Heart left ventricle (tissue), 16 donors: ENCODE measurements at regions of chr19 and their contacts with region 1.

Region 1: GRCh38 chr19:52007806-52008557 is at the start of gene ZNF615:
- DNase-seq: peak; percentile 90 to 94 (median 93)
- ATAC-seq: peak; percentile 97 to 100 (median 99)
- H3K4me3 ChIP-seq: peak within 1 kb of the TSS; percentile 47 to 92 (median 80)
- H3K27ac ChIP-seq: peak within 1 kb of the TSS; percentile 81 to 94 (median 88)
- H3K4me1 ChIP-seq: peaks cover 0 to 16% (median 9%) of the 10 kb centered on the region in 12 donors
- H3K27me3 ChIP-seq: no peaks in the 10 kb centered on the region
- CTCF ChIP-seq: no peak
- POLR2A ChIP-seq: peak in 1 of 2 donors; percentile 56
- total RNA-seq, gene ZNF615: 7.5 to 14.8 (median 10.2) TPM

Region 2: GRCh38 chr19:50649433-50650391 is 1358.3 kb before region 1 on chr19 and contains the start of gene C19orf81:
- intact Hi-C with region 1: no loop called
- DNase-seq: no peak
- ATAC-seq: no peak
- H3K4me3 ChIP-seq: no peak within 1 kb of the TSS
- H3K27ac ChIP-seq: no peak within 1 kb of the TSS
- H3K4me1 ChIP-seq: no peaks in the 10 kb centered on the region
- H3K27me3 ChIP-seq: peaks cover 0 to 51% (median 13%) of the 10 kb centered on the region in 9 donors
- CTCF ChIP-seq: no peak
- POLR2A ChIP-seq: no peak
- total RNA-seq, gene C19orf81: 0.65 to 3.6 (median 1.7) TPM in 7 of 9 donors, not detected in the others

Region 3: DNA sequence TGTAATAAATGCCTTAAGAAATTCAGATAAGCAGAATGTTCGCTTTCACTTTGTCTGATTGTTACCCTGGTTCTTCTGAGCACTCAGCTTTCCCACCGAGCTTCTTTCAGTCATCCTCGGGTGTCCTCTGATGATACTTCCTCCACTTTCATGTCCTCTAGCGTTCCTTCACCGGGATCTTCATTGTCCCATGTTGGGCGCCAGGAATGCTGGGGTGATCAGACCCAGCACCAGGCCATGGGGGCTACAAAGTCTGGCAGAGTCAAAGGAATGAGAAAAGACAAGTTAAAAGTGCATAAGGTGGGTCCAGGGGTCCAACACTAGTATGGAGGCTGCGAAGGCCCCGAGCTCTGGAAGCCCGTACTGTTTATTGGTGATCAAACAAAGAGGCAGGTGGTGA is 605.9 kb before region 1 on chr19:
- intact Hi-C with region 1: loop called in 1 of 10 experiments (anchors 5 kb)
- DNase-seq: no peak
- ATAC-seq: no peak
- H3K4me3 ChIP-seq: no peak overlapping the region
- H3K27ac ChIP-seq: no peak overlapping the region
- H3K4me1 ChIP-seq: peaks cover 0 to 11% (median 0%) of the 10 kb centered on the region in 12 donors
- H3K27me3 ChIP-seq: peaks cover 0 to 3% (median 0%) of the 10 kb centered on the region in 9 donors
- CTCF ChIP-seq: no peak
- POLR2A ChIP-seq: no peak

Region 4: DNA sequence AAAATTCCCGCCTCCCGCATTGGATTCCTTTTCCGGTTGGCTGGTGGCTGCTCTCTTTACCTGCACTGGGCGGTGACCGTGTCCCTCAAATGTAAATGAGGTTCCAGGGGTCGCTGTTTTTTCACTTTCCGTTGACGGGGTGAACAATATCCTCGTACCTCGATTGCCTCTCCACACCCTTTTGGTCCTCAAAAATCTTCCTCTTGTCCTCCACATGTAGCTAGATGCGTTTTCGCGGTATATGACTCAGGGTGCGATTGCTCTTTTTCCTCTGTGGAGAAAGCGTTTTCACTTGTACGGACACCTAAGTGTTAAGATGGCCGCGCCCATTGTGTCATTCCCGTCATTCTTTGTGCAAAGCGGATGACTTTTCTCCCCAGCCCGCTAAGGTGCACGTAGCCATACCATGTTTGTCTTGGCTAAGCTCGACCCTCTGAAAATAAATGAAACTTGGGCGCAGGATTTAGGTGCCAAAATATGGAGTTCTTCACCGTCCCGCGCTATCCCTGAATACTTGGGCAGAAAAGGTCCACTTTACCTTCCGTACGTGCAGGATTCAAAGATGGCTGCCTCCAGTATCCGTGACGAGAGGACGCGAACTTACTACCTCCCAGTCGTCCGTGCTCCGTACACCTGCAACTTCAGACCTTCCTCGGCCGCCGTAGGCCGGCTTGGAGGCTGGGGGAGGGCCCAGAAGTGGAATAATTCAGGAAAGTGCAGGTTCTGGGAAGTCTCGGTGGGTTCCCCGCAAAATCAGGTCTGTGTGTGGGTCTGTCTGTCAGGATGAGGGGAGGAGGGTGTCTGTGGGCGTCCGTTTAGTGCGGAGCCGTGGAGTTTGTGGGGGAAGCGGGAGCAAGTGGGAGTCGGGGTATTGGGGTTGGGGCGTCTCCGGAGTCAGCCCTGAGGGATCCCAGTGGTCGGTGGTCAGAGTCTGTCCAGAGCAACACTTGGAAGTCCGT is 80.9 kb before region 1 on chr19 and contains the start of gene ZNF613:
- intact Hi-C with region 1: loop called in 1 of 10 experiments (anchors 5 kb)
- DNase-seq: peak; percentile 89 to 93 (median 92)
- ATAC-seq: peak; percentile 97 to 99 (median 98)
- H3K4me3 ChIP-seq: peak within 1 kb of the TSS; percentile 60 to 95 (median 84)
- H3K27ac ChIP-seq: peak within 1 kb of the TSS; percentile 81 to 97 (median 88)
- H3K4me1 ChIP-seq: peaks cover 0 to 13% (median 8%) of the 10 kb centered on the region in 12 donors
- H3K27me3 ChIP-seq: no peaks in the 10 kb centered on the region
- CTCF ChIP-seq: peak in 9 of 12 donors; percentile 12 to 50 (median 33)
- POLR2A ChIP-seq: no peak
- total RNA-seq, gene ZNF613: 3.1 to 6.8 (median 4.3) TPM

Region 5: GRCh38 chr19:51959791-51960190 is 48.2 kb before region 1 on chr19:
- intact Hi-C with region 1: no loop called
- DNase-seq: no peak
- ATAC-seq: peak in 1 of 4 donors; percentile 41
- H3K4me3 ChIP-seq: no peak overlapping the region
- H3K27ac ChIP-seq: peak overlapping the region in 2 of 12 donors; percentile 32 to 39
- H3K4me1 ChIP-seq: peaks cover 0 to 21% (median 0%) of the 10 kb centered on the region in 12 donors
- H3K27me3 ChIP-seq: no peaks in the 10 kb centered on the region
- CTCF ChIP-seq: no peak
- POLR2A ChIP-seq: no peak

Region 6: DNA sequence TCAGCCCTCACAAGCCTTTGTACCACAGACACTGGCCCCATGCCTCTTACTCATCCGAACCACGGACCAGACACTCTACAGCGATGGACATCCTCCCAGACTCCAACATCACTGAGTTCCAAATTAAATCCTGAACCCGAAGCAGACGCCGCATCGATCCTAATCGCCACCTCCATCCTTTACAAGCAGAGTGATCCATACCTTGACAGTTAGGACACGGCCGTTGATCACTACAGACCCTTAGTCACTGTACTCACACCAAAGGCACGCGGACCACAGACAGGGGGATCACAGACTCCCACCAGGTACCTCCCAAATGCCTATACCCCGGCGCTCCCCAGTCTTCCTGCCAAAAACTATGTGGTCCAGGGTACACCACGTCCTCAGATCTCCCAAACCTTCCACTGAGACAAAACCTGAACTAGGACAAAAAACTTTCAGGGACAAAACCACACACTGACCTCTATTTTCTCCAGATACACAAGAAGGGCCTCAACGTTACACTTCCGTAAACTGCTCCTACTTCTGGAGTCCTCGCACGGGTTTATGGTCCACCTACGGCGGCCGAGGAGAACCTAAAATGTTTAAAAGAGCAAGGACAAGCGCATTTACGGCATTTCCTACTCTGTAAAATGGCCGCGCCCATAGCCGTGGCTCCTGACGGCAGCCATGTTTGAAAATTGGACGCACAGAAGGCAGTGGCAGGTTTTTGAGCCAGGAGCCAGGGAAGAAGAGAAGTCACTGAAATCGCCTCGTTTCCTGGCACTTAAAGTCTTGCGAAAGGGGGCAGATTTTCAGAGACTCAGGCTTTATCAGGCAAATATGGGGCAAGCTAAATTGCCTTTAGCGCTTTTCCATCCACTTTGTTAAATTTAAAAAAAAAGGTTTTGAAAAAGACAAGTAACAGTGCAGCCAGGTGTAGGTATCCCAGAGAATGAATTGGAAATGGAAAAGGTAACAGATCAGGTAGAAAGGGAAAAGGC is 21.4 kb before region 1 on chr19 and contains the start of gene ZNF350:
- intact Hi-C with region 1: loop called in 1 of 10 experiments (anchors 2 kb)
- DNase-seq: peak; percentile 90 to 96 (median 94)
- ATAC-seq: peak; percentile 98 to 100 (median 100)
- H3K4me3 ChIP-seq: peak within 1 kb of the TSS; percentile 66 to 94 (median 81)
- H3K27ac ChIP-seq: peak within 1 kb of the TSS in 11 of 12 donors; percentile 40 to 82 (median 73)
- H3K4me1 ChIP-seq: peaks cover 0 to 17% (median 12%) of the 10 kb centered on the region in 12 donors
- H3K27me3 ChIP-seq: no peaks in the 10 kb centered on the region
- CTCF ChIP-seq: peak in 1 of 12 donors; percentile 14
- POLR2A ChIP-seq: no peak
- total RNA-seq, gene ZNF350: 3.4 to 10.7 (median 7.6) TPM

Region 7: GRCh38 chr19:52028027-52028779 is 20.2 kb after region 1 on chr19 and contains the start of gene ZNF614:
- intact Hi-C with region 1: loop called in 2 of 10 experiments (anchors 1 to 2 kb)
- DNase-seq: peak; percentile 88 to 92 (median 90)
- ATAC-seq: peak; percentile 96 to 99 (median 98)
- H3K4me3 ChIP-seq: peak within 1 kb of the TSS; percentile 67 to 92 (median 78)
- H3K27ac ChIP-seq: peak within 1 kb of the TSS; percentile 85 to 98 (median 92)
- H3K4me1 ChIP-seq: peaks cover 0 to 20% (median 13%) of the 10 kb centered on the region in 12 donors
- H3K27me3 ChIP-seq: no peaks in the 10 kb centered on the region
- CTCF ChIP-seq: no peak
- POLR2A ChIP-seq: peak in 1 of 2 donors; percentile 40
- total RNA-seq, gene ZNF614: 4.6 to 7.9 (median 6.8) TPM

Region 8: GRCh38 chr19:52048555-52049501 is 40.8 kb after region 1 on chr19 and contains the start of gene ZNF432:
- intact Hi-C with region 1: loop called in 2 of 10 experiments (anchors 2 to 5 kb)
- DNase-seq: peak; percentile 95 to 98 (median 95)
- ATAC-seq: peak; percentile 97 to 99 (median 98)
- H3K4me3 ChIP-seq: peak within 1 kb of the TSS; percentile 48 to 76 (median 68)
- H3K27ac ChIP-seq: peak within 1 kb of the TSS; percentile 71 to 99 (median 94)
- H3K4me1 ChIP-seq: peaks cover 0 to 19% (median 7%) of the 10 kb centered on the region in 12 donors
- H3K27me3 ChIP-seq: no peaks in the 10 kb centered on the region
- CTCF ChIP-seq: no peak
- POLR2A ChIP-seq: peak in 1 of 2 donors; percentile 38
- total RNA-seq, gene ZNF432: 3.4 to 10.9 (median 8.2) TPM

Region 9: GRCh38 chr19:52070476-52070875 is 62.5 kb after region 1 on chr19:
- intact Hi-C with region 1: no loop called
- DNase-seq: no peak
- ATAC-seq: no peak
- H3K4me3 ChIP-seq: no peak overlapping the region
- H3K27ac ChIP-seq: no peak overlapping the region
- H3K4me1 ChIP-seq: no peaks in the 10 kb centered on the region
- H3K27me3 ChIP-seq: no peaks in the 10 kb centered on the region
- CTCF ChIP-seq: no peak
- POLR2A ChIP-seq: no peak